ENCODE measurements at regions of chr4 and their contacts with region 1.

Region 1: GRCh38 chr4:185738038-185738552 is 73.9 kb downstream of the SORBS2 start:
- DNase-seq: no peak
- H3K4me3 ChIP-seq: peak overlapping the region; percentile 1 to 43
- H3K27ac ChIP-seq: peak overlapping the region; percentile 81 to 90
- H3K4me1 ChIP-seq: peaks cover 13 to 55% of the 10 kb centered on the region in 2 donors
- H3K27me3 ChIP-seq: no peaks in the 10 kb centered on the region
- CTCF ChIP-seq: no peak

Region 2: GRCh38 chr4:185700048-185700447 is 38.0 kb before region 1 on chr4:
- intact Hi-C with region 1: loop called (anchors 5 kb)
- DNase-seq: peak; percentile 19 to 75
- H3K4me3 ChIP-seq: no peak overlapping the region
- H3K27ac ChIP-seq: peak overlapping the region; percentile 87 to 89
- H3K4me1 ChIP-seq: peaks cover 0 to 10% of the 10 kb centered on the region in 2 donors
- H3K27me3 ChIP-seq: no peaks in the 10 kb centered on the region
- CTCF ChIP-seq: no peak

Region 3: GRCh38 chr4:185774845-185775680 is 37.0 kb after region 1 on chr4:
- intact Hi-C with region 1: loop called (anchors 2 kb)
- DNase-seq: peak in 1 of 2 donors; percentile 76
- H3K4me3 ChIP-seq: peak overlapping the region; percentile 55 to 64
- H3K27ac ChIP-seq: peak overlapping the region; percentile 52 to 81
- H3K4me1 ChIP-seq: peaks cover 0 to 24% of the 10 kb centered on the region in 2 donors
- H3K27me3 ChIP-seq: no peaks in the 10 kb centered on the region
- CTCF ChIP-seq: no peak

Measured in ascending aorta (tissue), 2 donors.